ENCODE measurements at regions of chr12 and their contacts with region 1.

Region 1: GRCh38 chr12:50986966-50987737 is 34.8 kb downstream of the HIGD1C start:
- DNase-seq: no peak
- H3K4me3 ChIP-seq: no peak overlapping the region
- H3K27ac ChIP-seq: no peak overlapping the region
- H3K4me1 ChIP-seq: no peaks in the 10 kb centered on the region; a peak in 1 of 7 replicates
- H3K27me3 ChIP-seq: no peaks in the 10 kb centered on the region
- CTCF ChIP-seq: peak in 2 of 3 experiments; percentile 72 to 81; a peak in 3 of 4 replicates
- EP300 ChIP-seq: no peak
- POLR2A ChIP-seq: no peak
- RAD21 ChIP-seq: peak; percentile 78 to 87

Region 2: DNA sequence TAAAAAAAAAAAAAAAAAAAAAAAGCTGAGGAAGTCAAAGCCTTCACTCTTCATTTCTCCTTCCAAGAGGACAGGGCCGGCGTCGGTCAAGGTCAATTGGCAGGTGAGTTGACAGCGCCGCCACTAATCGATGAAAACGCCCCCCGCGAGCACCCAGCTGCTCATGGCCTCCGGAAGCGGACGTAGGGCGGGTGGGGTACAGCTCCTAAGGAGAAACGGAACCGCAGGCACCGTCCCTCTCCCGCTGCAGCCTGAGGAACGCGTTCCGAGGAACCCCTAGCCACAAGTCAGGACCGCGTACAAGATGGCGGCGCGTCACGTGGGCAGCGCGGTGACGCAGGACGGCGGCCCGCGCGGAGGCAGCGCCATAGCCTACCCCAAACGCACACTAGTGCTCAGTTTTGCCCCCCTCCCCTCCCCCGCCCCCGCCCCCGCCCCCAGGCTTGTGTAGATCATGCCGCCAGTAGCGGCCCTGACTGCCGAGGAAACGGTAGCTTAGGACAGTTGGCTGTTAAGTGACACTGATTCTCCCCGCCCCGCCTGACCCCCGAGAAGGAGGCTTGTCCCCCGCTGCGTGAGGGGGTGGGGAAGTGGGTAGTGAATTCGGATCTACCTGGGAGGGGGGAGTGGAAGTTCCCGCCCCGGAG is 223.4 kb before region 1 on chr12 and contains the start of gene ATF1:
- CTCF ChIA-PET with region 1: interaction called, 34 read pairs
- POLR2A ChIA-PET with region 1: interaction called, 4 read pairs
- DNase-seq: peak; percentile 83 to 91
- H3K4me3 ChIP-seq: peak within 1 kb of the TSS; percentile 64 to 94 (median 72)
- H3K27ac ChIP-seq: peak within 1 kb of the TSS; percentile 97
- H3K4me1 ChIP-seq: peaks cover 0 to 7% (median 3%) of the 10 kb centered on the region in 4 experiments; a peak in 4 of 7 replicates
- H3K27me3 ChIP-seq: no peaks in the 10 kb centered on the region
- CTCF ChIP-seq: no peak
- EP300 ChIP-seq: no peak
- POLR2A ChIP-seq: peak; percentile 83 to 86
- RAD21 ChIP-seq: no peak
- total RNA-seq, gene ATF1: 41.6 and 41.8 TPM in 2 replicates

Region 3: DNA sequence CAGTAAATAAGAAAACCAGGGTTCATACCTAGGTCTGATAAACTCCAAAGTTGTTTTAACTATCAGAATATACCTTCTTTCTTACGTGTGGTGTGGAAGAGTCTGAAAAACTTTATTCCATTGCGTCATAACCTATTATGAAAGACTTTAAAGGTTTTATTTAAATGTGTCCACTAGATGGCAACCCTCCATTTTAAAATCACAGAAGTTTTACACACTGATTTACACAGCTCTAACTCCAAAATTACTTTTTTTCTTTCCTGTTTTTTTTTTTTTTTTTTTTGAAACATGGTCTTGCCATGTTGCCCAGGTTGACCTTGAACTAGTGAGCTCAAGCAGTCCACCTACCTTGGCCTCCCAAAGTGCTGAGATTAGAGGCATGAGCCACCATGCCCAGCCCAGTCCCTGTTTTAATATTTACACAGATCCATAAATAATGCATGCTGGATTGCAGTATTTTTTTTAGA is 161.7 kb before region 1 on chr12:
- CTCF ChIA-PET with region 1: interaction called, 89 read pairs
- POLR2A ChIA-PET with region 1: interaction called, 3 read pairs
- DNase-seq: no peak
- H3K4me3 ChIP-seq: no peak overlapping the region
- H3K27ac ChIP-seq: no peak overlapping the region
- H3K4me1 ChIP-seq: no peaks in the 10 kb centered on the region
- H3K27me3 ChIP-seq: no peaks in the 10 kb centered on the region
- CTCF ChIP-seq: peak in 2 of 3 experiments; percentile 25 to 31; a peak in 2 of 4 replicates
- EP300 ChIP-seq: no peak
- POLR2A ChIP-seq: no peak
- RAD21 ChIP-seq: peak in 1 of 2 experiments; percentile 56

Region 4: GRCh38 chr12:51000245-51000644 is 13.1 kb after region 1 on chr12:
- CTCF ChIA-PET with region 1: interaction called, 11 read pairs
- POLR2A ChIA-PET with region 1: interaction called, 5 read pairs
- DNase-seq: no peak
- H3K4me3 ChIP-seq: no peak overlapping the region
- H3K27ac ChIP-seq: no peak overlapping the region
- H3K4me1 ChIP-seq: peaks cover 0 to 2% (median under 1%) of the 10 kb centered on the region in 4 experiments; a peak in 3 of 7 replicates
- H3K27me3 ChIP-seq: no peaks in the 10 kb centered on the region
- CTCF ChIP-seq: no peak
- EP300 ChIP-seq: no peak
- POLR2A ChIP-seq: no peak
- RAD21 ChIP-seq: no peak

Region 5: DNA sequence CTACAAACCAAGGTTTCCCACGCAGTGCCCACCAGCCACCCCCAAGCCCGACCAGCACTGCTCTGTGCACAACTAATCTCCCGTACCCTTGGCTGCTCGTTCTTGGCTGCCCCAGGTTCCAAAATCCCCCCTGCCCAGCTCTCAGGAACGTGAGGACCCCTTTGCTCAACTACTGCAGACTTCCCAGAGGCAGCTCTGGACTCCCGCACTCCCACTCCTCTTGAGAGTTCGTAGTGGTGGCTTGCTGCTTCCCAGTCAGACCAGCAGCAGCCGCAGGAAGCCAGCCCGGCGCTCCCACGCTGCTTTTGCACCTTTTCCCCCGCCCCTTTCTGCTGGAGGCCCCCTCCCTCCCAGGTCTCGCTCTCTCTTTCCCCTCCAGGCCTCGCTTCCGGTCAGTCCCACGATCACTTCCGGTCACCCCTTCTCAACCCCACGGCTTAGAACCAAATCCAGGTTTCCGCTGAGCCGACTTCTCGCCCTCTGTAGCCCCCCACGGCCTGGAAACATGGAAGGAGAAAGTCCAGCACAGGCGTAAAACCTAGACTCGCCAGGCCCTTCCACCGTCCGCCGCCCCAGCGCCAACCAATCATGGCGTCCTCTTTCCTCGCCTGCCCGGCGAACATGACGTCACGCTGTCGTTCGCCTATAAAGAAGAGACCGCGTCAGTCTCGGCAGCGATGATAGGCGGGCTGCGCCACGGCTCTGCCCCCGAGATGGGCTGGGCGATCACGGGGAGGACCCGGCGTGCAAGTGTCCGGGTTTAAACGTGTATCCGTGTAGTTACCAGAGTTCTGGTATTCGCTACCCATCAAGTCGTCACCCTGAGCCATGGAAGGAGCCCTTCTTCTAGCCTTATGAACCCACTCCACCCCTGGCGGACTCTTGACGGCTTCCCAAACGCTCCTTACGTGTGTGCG is 185.6 kb after region 1 on chr12 and contains the start of gene TFCP2:
- CTCF ChIA-PET with region 1: no interaction called
- POLR2A ChIA-PET with region 1: no interaction called
- DNase-seq: peak; percentile 75 to 92
- H3K4me3 ChIP-seq: peak within 1 kb of the TSS; percentile 84 to 99 (median 86)
- H3K27ac ChIP-seq: peak within 1 kb of the TSS; percentile 99
- H3K4me1 ChIP-seq: peaks cover 0 to 1% (median 0%) of the 10 kb centered on the region in 4 experiments; a peak in 1 of 7 replicates
- H3K27me3 ChIP-seq: no peaks in the 10 kb centered on the region
- CTCF ChIP-seq: no peak
- EP300 ChIP-seq: no peak
- POLR2A ChIP-seq: peak; percentile 75 to 89
- RAD21 ChIP-seq: no peak
- total RNA-seq, gene TFCP2: 44.5 and 49.2 TPM in 2 replicates

Measured in H1 (cell line).